ENCODE measurements at regions of chr2 and their contacts with region 1.

Region 1: GRCh38 chr2:95159690-95160449 is at the start of gene ZNF514:
- DNase-seq: peak; percentile 92
- H3K4me3 ChIP-seq: peak within 1 kb of the TSS; percentile 65 to 93 (median 82)
- H3K27ac ChIP-seq: peak within 1 kb of the TSS; percentile 86 to 92 (median 88)
- H3K4me1 ChIP-seq: peaks cover 25 to 39% (median 28%) of the 10 kb centered on the region in 4 donors
- H3K27me3 ChIP-seq: no peaks in the 10 kb centered on the region
- CTCF ChIP-seq: no peak
- EP300 ChIP-seq: no peak
- POLR2A ChIP-seq: no peak
- total RNA-seq, gene ZNF514: 12.1 to 14.5 (median 13.2) TPM

Region 2: DNA sequence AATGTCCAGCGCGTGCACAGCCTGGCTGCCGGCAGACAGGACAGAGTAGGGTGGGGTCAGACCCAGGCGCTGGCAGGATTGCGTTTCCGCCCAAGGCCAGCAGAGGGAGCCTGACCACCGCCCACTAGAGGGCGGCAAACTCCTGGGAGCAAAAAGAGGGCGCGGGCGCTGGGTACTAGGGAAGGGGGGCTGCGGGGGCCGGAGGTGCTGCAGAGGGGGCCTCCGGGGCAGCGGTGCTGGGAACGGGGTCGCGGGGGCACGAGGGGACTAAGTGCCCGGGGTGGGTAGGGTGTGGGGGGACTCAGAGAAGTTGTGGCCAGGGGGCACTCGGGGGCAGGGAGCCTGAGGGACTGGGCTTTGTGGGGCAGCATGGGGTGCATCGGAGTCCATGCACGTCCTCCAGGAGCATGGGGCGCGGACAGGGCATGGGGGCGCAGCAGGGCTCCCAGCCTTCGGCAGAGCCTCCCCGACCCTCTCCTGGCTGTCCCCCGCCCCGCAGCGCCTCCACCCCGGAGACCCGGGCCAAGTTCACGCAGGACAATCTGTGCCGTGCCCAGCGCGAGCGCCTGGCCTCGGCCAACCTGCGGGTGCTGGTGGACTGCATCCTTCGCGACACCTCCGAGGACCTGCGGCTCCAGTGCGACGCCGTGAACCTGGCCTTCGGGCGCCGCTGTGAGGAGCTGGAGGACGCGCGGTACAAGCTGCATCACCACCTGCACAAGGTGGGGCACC is 285.4 kb before region 1 on chr2:
- intact Hi-C with region 1: no loop called
- DNase-seq: no peak
- H3K4me3 ChIP-seq: no peak overlapping the region
- H3K27ac ChIP-seq: no peak overlapping the region
- H3K4me1 ChIP-seq: peaks cover 0 to 13% (median 6%) of the 10 kb centered on the region in 4 donors
- H3K27me3 ChIP-seq: peaks cover 0 to 79% (median 0%) of the 10 kb centered on the region in 4 donors
- CTCF ChIP-seq: peak; percentile 41 to 69 (median 55)
- EP300 ChIP-seq: no peak
- POLR2A ChIP-seq: no peak

Region 3: DNA sequence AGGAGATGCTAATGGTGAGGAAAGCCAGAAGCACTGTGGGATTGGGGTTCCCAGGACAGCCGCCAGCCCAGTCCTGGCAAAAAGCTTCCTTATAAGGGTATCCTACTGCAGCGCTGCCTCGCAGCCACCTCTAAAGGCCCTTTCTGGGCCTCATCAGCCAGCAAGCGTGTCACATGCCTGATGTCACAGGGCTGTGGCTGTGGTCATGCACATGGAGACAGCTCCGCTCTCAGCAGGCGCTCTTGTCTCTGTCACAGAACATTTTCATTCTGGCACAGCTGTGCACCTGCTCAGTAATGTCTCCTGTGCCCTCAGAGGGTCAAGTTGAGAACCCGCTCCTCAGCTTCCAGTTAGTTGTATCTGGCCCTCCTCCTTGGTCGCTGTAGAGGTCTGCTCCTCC is 152.0 kb before region 1 on chr2:
- intact Hi-C with region 1: no loop called
- DNase-seq: no peak
- H3K4me3 ChIP-seq: no peak overlapping the region
- H3K27ac ChIP-seq: no peak overlapping the region
- H3K4me1 ChIP-seq: peaks cover 0 to 6% (median 0%) of the 10 kb centered on the region in 4 donors
- H3K27me3 ChIP-seq: peaks cover 0 to 8% (median 0%) of the 10 kb centered on the region in 4 donors
- CTCF ChIP-seq: no peak
- EP300 ChIP-seq: no peak
- POLR2A ChIP-seq: no peak

Region 4: DNA sequence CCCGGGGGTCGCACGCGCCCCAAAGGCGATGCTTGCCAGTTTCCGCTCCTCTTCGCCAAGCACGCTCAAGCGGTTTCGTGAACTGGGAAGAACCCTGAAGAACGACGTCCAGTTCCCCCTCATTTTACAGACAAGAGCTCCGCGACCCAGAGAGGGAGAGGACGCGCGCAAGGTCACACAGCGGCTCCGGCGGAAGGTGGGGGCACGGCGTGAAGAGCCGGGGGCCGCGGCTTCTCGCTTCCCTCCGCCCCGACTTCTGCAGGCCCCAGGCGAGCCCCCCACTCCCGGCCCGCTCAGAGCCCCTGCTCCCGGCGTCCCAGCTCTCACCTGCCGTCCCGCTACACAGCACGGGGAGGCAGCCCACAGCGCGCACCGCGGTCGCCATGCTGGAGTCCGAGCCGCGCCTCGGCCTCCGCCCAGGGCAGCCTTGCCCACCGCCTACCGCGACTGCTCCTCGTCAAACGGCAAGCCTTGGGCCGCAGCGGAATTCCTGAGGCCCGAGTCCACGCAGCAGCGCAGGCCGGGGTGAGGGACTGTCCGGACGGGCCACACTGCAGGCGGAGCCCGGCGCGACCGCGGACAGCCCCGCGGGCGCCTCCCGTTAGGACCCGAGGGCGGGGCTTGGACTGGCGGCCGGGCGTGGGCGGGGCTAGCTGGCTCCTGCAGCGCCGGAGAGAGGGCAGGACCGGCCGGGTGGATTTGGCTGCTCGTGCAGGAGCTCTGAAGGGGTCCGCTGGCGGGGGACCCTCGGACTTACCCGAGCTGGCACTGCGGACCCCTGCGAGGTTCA is 38.3 kb before region 1 on chr2 and contains the start of gene MRPS5:
- intact Hi-C with region 1: loop called (anchors 2 kb)
- DNase-seq: peak; percentile 93
- H3K4me3 ChIP-seq: peak within 1 kb of the TSS; percentile 78 to 97 (median 93)
- H3K27ac ChIP-seq: peak within 1 kb of the TSS; percentile 89 to 96 (median 92)
- H3K4me1 ChIP-seq: peaks cover 19 to 41% (median 39%) of the 10 kb centered on the region in 4 donors
- H3K27me3 ChIP-seq: no peaks in the 10 kb centered on the region
- CTCF ChIP-seq: peak in 1 of 3 experiments; percentile 29
- EP300 ChIP-seq: no peak
- POLR2A ChIP-seq: peak; percentile 3
- total RNA-seq, gene MRPS5: 31.1 to 46.6 (median 39.8) TPM

Region 5: DNA sequence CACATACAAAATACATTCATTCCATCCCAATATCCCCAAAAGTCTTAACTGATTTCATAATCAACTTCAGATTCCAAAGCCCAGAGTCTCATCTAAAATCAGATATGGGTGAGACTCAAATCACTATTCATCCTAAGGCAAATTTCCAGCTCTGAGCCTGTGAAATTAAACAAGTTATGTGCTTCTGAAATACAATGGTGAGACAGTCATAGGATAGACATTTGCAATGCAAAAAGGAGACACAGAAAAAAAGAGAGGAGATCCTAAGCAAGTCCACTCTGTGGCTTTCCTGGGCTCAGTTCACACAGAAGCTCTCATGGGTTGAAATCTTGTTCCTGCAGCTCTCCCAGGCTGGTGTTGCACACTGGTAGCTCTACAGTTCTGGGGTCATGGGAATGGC is 65.8 kb after region 1 on chr2:
- intact Hi-C with region 1: no loop called
- DNase-seq: no peak
- H3K4me3 ChIP-seq: no peak overlapping the region
- H3K27ac ChIP-seq: no peak overlapping the region
- H3K4me1 ChIP-seq: no peaks in the 10 kb centered on the region
- H3K27me3 ChIP-seq: no peaks in the 10 kb centered on the region
- CTCF ChIP-seq: no peak
- EP300 ChIP-seq: no peak
- POLR2A ChIP-seq: no peak

Region 6: DNA sequence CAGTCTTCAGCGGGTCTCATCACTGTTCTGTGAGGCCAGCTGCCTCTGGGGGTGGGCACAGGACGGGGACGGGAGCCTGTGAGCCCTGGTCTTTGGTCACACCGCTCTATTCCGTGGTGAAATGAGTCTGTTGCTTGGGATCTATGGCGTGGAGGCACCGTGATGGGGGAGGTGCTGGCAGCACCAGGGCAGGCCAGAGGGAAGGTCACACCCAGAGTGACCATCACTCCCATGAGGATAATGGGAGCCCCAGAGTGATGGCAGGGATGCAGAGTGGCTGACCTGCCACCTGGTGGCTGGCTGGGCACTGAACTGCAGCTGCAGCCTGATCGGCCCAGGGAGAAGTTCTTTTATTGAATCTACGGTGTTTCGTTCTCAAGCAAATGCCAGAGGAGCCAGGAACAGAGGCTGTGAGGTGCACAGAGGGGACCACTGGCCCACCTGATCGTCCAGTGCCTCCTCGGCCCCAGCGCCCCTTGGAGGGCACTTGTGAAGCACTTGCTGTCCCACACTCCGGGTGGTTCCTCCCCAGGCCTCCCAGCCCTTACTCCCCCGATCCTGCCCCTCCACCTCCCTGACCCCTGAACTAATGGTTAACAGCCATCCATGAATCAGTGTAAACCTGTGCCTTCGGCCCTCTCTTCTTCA is 155.2 kb after region 1 on chr2:
- intact Hi-C with region 1: no loop called
- DNase-seq: no peak
- H3K4me3 ChIP-seq: no peak overlapping the region
- H3K27ac ChIP-seq: no peak overlapping the region
- H3K4me1 ChIP-seq: no peaks in the 10 kb centered on the region
- H3K27me3 ChIP-seq: peaks cover 0 to 33% (median 0%) of the 10 kb centered on the region in 4 donors
- CTCF ChIP-seq: peak; percentile 25 to 48 (median 37)
- EP300 ChIP-seq: no peak
- POLR2A ChIP-seq: no peak